MCF 10A (cell line): ENCODE measurements at regions of chr17 and their contacts with region 1.

Region 1: DNA sequence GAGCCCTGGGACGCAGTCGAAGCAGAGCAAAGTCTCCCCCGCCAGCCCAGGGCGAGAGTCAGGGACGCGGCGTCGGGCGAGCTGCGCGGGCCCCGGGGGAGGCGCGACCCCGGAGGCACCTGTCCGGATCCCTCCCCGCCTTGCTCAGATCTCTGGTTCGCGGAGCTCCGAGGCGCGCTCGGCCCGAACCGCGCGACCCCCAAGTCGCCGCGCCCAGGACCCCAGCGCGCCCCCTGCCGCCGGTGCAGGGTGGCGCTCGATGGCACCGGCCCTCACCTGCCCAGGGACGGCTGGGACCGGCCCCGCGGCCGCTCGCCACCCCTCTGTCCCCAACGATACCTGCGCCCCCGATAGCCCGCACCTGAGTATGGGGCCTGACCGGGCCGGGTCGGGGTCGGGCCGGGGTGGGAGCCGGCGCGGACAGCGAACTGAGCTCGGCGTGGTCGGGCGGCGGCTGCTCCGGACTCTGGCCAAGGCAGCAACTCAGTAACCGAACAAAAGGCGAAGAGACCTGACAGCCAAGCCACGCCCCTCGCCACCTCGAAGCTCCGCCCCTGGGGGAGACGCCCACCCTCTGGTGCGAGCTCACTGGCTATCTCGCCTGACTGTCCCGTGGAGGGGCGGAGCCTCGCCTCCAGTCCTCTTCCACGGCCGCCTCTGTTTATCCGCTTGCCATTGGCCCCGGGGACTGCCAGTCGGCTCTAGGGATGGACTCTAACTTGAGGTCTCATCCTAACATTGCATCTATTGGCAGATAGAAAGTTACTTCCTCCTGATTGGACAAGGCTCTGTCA is at the start of gene JUP:
- DNase-seq: peak; percentile 100
- H3K4me3 Mint-ChIP-seq: peak within 1 kb of the TSS; percentile 74
- H3K27ac Mint-ChIP-seq: peak within 1 kb of the TSS; percentile 70
- H3K4me1 Mint-ChIP-seq: peaks cover 33% of the 10 kb centered on the region
- H3K27me3 Mint-ChIP-seq: no peaks in the 10 kb centered on the region
- CTCF ChIP-seq: peak; percentile 77
- total RNA-seq, gene JUP: 112 and 131 TPM in 2 replicates

Region 2: DNA sequence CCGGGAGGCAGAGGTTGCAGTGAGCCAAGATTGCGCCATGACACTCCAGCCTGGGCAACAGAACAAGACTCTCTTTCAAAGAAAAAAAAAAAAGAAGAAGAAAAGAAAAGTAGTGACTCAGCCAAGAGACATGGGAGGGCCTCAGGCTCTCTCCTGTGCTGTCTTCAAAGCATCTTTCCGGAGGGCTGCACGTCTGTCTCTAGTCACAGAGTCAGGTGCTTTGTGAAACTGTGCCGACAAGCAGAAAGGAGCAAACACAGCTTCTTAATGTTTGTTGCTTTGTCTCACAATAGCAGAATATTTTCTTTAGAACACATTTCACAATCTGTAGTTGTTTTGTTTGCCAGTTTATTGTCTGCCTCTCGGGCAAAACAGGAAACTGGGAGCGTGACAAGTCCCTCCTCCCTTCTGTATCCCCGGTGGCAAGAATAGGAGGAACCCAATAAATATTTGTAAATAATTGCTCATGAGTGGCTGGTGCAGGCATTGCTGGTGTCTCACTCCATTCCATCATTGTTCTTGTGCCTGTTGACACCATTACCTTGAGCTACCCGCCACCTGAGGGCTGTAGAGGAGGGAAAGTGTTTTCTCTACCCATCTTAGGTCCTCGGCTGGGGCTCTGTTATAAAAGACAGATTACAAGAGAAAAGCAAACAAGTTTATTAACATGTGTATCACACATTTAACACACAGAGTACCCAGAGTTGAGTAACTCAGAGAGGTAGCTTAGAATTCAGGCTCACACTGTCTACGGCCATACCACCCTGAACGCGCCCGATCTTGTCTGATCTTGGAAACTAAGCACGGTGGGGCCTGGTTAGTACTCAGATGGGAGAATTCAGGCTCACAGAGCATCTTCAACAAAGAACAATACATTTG is 68.8 kb before region 1 on chr17:
- CTCF ChIA-PET with region 1: no interaction called
- POLR2A ChIA-PET with region 1: interaction called, 11 read pairs
- intact Hi-C with region 1: no loop called
- DNase-seq: peak; percentile 78
- H3K4me3 Mint-ChIP-seq: peak overlapping the region; percentile 51
- H3K27ac Mint-ChIP-seq: peak overlapping the region; percentile 66
- H3K4me1 Mint-ChIP-seq: peaks cover 10% of the 10 kb centered on the region
- H3K27me3 Mint-ChIP-seq: no peaks in the 10 kb centered on the region
- CTCF ChIP-seq: no peak

Region 3: DNA sequence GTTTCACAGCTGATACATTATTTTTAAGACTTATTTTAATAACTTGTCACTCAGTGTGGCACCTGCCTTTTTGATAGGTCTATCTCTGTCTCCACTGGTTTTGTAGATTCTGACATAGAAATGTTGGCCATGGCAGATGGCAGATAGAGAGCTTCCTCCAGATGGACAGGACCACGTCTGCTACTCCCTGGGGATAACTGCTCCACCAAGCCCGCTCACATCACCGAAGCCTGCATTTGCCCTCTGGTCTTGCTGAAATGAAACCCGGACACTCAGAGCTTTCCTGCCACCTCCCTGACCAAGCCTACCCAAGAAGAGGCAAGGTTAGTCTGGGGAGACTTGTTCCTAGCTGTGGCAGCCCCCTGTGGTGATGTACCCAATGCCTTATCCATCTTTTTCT is 35.6 kb before region 1 on chr17:
- CTCF ChIA-PET with region 1: interaction called, 5 read pairs
- POLR2A ChIA-PET with region 1: interaction called, 27 read pairs
- intact Hi-C with region 1: no loop called
- DNase-seq: no peak
- H3K4me3 Mint-ChIP-seq: no peak overlapping the region
- H3K27ac Mint-ChIP-seq: no peak overlapping the region
- H3K4me1 Mint-ChIP-seq: no peaks in the 10 kb centered on the region
- H3K27me3 Mint-ChIP-seq: no peaks in the 10 kb centered on the region
- CTCF ChIP-seq: no peak

Region 4: GRCh38 chr17:41811549-41812380 is 25.3 kb after region 1 on chr17 and contains the start of gene P3H4:
- CTCF ChIA-PET with region 1: interaction called, 7 read pairs
- POLR2A ChIA-PET with region 1: interaction called, 599 read pairs
- intact Hi-C with region 1: no loop called
- DNase-seq: peak; percentile 74
- H3K4me3 Mint-ChIP-seq: peak within 1 kb of the TSS; percentile 95
- H3K27ac Mint-ChIP-seq: peak within 1 kb of the TSS; percentile 85
- H3K4me1 Mint-ChIP-seq: peaks cover 19% of the 10 kb centered on the region
- H3K27me3 Mint-ChIP-seq: no peaks in the 10 kb centered on the region
- CTCF ChIP-seq: peak; percentile 52
- total RNA-seq, gene P3H4: 36.4 and 41.5 TPM in 2 replicates

Region 5: DNA sequence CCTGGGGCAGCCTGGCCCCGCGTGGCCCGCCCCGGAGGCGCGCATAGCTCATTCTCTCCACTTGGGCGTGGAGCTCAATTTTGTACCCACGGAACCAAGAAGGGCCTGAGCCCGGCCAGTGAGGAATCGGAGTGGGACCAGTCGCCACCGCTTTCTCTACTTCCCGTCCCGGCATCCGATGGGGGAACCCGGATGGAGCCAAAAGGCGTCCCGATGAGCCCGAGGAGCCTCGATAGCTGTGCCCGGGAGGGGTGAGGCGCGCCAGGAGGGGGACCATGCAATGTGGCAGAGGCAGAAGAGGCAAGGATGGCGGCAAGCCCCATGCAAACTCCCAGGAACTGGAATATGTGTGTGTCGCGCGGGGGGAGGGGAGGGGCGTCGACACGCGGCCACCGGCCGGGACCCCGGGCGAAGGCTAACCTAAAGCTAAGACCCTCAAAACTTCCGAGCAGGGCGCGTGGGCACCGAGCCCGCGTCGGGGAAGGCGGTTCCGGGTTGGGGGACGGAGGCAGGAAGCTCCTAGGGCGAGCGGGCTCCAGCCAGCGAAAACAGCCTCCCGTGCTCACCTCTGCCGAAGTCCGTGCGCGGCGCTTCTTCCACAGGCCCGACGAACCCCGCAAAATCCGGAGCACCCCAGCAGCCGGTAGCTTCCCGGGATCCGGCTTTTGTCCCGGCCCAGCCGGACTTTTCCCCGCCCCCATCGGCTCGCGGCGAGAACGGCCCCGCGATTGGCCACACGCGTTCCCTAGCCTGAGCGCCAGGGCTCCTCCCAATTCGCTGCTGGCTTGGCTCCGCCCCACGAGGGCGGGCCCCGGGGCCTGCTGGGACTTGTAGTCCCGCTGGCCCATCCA is 132.1 kb after region 1 on chr17 and contains the start of gene ACLY:
- CTCF ChIA-PET with region 1: no interaction called
- POLR2A ChIA-PET with region 1: interaction called, 18 read pairs
- intact Hi-C with region 1: no loop called
- DNase-seq: peak; percentile 98
- H3K4me3 Mint-ChIP-seq: peak within 1 kb of the TSS; percentile 87
- H3K27ac Mint-ChIP-seq: peak within 1 kb of the TSS; percentile 78
- H3K4me1 Mint-ChIP-seq: peaks cover 30% of the 10 kb centered on the region
- H3K27me3 Mint-ChIP-seq: no peaks in the 10 kb centered on the region
- CTCF ChIP-seq: no peak
- total RNA-seq, gene ACLY: 67.7 and 67.9 TPM in 2 replicates

Region 6: GRCh38 chr17:41959336-41960095 is 173.1 kb after region 1 on chr17:
- CTCF ChIA-PET with region 1: no interaction called
- POLR2A ChIA-PET with region 1: no interaction called
- intact Hi-C with region 1: no loop called
- DNase-seq: peak; percentile 55
- H3K4me3 Mint-ChIP-seq: no peak overlapping the region
- H3K27ac Mint-ChIP-seq: peak overlapping the region; percentile 16
- H3K4me1 Mint-ChIP-seq: no peaks in the 10 kb centered on the region
- H3K27me3 Mint-ChIP-seq: no peaks in the 10 kb centered on the region
- CTCF ChIP-seq: peak; percentile 44